Spleen (tissue), 13 donors: ENCODE measurements at regions of chr12 and their contacts with region 1.

Region 1: GRCh38 chr12:70242695-70243509 is at the start of gene CNOT2:
- DNase-seq: peak; percentile 97
- H3K4me3 ChIP-seq: peak within 1 kb of the TSS; percentile 80 to 93 (median 88)
- H3K27ac ChIP-seq: peak within 1 kb of the TSS; percentile 94 to 99 (median 98)
- H3K4me1 ChIP-seq: peaks cover 38 to 66% (median 58%) of the 10 kb centered on the region in 6 donors
- H3K27me3 ChIP-seq: no peaks in the 10 kb centered on the region
- CTCF ChIP-seq: no peak
- POLR2A ChIP-seq: peak in 1 of 3 donors; percentile 38
- total RNA-seq, gene CNOT2: 87.2 to 212 (median 116) TPM

Region 2: DNA sequence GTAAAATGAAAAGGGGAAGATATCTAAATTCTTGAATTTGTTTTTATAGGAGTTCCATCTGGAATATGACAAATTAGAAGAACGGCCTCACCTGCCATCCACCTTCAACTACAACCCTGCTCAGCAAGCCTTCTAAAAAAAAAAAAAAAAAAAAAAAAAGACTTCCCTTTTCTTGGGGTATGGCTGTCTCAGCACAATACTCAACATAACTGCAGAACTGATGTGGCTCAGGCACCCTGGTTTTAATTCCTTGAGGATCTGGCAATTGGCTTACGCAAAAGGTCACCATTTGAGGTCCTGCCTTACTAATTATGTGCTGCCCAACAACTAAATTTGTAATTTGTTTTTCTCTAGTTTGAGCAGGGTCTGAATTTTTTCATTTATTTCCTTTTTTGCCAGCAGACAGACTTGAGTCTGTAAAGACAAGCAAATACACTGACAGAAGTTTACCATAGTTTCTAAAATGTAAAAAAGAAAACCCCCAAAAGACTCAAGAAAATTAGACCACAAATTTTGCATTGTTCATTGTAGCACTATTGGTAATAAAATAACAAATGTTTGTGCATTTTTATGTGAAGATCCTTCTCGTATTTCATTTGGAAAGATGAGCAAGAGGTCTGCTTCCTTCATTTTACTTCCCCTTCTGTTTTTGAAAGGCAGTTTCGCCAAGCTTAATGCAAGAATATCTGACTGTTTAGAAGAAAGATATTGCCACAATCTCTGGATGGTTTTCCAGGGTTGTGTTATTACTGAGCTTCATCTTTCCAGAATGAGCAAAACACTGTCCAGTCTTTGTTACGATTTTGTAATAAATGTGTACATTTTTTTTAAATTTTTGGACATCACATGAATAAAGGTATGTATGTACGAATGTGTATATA is 111.1 kb after region 1 on chr12:
- intact Hi-C with region 1: loop called (anchors 10 kb)
- DNase-seq: no peak
- H3K4me3 ChIP-seq: no peak overlapping the region
- H3K27ac ChIP-seq: peak overlapping the region in 4 of 8 donors; percentile 11 to 51 (median 46)
- H3K4me1 ChIP-seq: peaks cover 0 to 19% (median 3%) of the 10 kb centered on the region in 6 donors
- H3K27me3 ChIP-seq: no peaks in the 10 kb centered on the region
- CTCF ChIP-seq: no peak
- POLR2A ChIP-seq: no peak